CD4-positive, alpha-beta memory T cell (primary cell): ENCODE measurements at regions of chr16 and their contacts with region 1.

Region 1: GRCh38 chr16:68356249-68356918 is 45.6 kb downstream of the PRMT7 start:
- DNase-seq: peak; percentile 73 to 86 (median 80)
- H3K4me3 ChIP-seq: peak overlapping the region; percentile 23 to 29
- H3K4me3 Mint-ChIP-seq: peak overlapping the region; percentile 65 to 89 (median 80)
- H3K27ac ChIP-seq: no peak overlapping the region
- H3K27ac Mint-ChIP-seq: peak overlapping the region in 6 of 7 donors; percentile 47 to 85 (median 80)
- H3K4me1 ChIP-seq: peaks cover 40% of the 10 kb centered on the region
- H3K4me1 Mint-ChIP-seq: peaks cover 21 to 51% (median 36%) of the 10 kb centered on the region in 4 donors
- H3K27me3 ChIP-seq: no peaks in the 10 kb centered on the region
- H3K27me3 Mint-ChIP-seq: no peaks in the 10 kb centered on the region

Region 2: DNA sequence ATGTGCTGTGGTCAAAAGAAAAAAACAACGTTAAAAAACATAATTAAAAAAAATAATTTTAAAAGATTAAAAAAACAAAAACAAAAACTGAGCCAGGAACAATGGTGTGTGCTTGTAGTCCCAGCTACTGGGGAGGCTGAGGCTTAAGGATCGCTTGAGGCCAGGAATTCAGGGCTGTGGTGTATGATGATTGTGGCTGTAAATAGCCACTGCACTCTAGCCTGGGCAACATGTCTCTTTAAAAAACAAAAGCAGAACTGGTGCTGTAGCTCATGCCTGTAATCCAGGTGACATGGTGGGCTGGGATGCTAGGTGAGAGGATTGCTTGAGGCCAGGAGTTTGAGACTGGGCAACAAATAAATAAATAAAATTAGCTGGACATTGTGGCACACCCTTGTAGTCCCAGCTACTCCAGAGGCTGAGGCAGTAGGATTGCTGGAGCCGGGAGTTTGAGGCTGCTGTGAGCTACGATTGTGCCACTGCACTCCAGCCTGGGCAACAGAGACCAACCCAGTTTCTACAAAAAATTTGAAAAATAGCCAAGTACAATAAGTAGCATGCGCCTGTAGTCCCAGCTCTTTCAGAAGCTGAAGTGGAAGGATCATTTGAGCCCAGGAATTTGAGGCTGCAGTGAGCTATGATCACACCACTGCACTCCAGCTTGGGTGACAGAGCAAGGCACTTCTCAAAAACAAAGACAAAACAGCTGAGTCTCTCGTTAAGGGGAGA is 227.6 kb before region 1 on chr16:
- CTCF ChIA-PET with region 1: no interaction called
- POLR2A ChIA-PET with region 1: no interaction called
- intact Hi-C with region 1: no loop called
- DNase-seq: no peak
- H3K4me3 ChIP-seq: no peak overlapping the region
- H3K4me3 Mint-ChIP-seq: peak overlapping the region in 2 of 8 donors; percentile 3 to 39
- H3K27ac ChIP-seq: no peak overlapping the region
- H3K27ac Mint-ChIP-seq: peak overlapping the region; percentile 54 to 94 (median 85)
- H3K4me1 ChIP-seq: peaks cover 46% of the 10 kb centered on the region
- H3K4me1 Mint-ChIP-seq: peaks cover 43 to 74% (median 55%) of the 10 kb centered on the region in 4 donors
- H3K27me3 ChIP-seq: no peaks in the 10 kb centered on the region
- H3K27me3 Mint-ChIP-seq: no peaks in the 10 kb centered on the region

Region 3: DNA sequence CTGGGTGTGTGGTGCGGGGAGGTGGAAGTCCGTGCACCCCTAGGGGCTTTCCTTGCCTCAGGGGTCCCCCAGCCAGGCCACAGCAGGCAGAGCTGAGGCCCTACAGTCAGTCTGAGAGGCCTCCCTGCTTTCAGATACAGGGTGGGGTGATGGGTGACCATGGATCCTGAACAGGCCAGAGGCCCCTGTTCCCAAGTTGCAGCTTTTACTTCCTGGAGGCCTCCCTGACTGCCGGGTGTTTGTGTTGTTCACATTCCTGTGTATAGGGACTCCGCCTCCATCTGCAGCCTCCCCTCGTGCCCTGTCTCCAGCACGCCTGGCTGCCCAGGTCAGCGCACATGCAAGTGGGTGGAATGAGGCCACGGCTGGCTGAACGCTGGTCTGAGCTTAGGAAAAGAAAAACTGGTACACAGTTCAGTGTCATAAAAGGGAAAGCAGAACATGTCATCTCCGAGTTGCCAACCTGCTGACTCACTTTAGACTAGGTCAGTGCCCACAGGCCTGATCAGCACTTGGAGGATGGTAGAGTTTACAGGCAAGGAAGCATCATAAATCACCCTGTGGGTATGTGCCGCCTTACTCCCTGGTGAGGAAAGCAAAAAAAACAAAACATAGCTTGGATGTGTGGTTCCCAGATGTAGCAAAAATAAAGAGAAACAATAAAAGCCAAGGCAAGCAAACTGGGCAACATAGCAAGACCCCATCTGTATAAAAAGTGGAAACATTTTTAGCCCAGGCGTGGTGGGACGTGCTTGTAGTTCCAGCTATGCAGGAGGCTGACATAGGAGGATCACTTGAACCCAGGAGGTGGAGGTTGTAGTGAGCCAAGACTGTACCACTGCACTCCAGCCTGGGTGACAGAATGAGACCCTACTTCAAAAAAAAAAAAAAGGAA is 98.2 kb before region 1 on chr16:
- CTCF ChIA-PET with region 1: interaction called, 14 read pairs
- POLR2A ChIA-PET with region 1: no interaction called
- intact Hi-C with region 1: no loop called
- DNase-seq: no peak
- H3K4me3 ChIP-seq: no peak overlapping the region
- H3K4me3 Mint-ChIP-seq: no peak overlapping the region
- H3K27ac ChIP-seq: no peak overlapping the region
- H3K27ac Mint-ChIP-seq: peak overlapping the region in 4 of 7 donors; percentile 12 to 86 (median 49)
- H3K4me1 ChIP-seq: peaks cover 10% of the 10 kb centered on the region
- H3K4me1 Mint-ChIP-seq: peaks cover 8 to 19% (median 9%) of the 10 kb centered on the region in 4 donors
- H3K27me3 ChIP-seq: no peaks in the 10 kb centered on the region
- H3K27me3 Mint-ChIP-seq: no peaks in the 10 kb centered on the region

Region 4: GRCh38 chr16:68298907-68299561 is 57.4 kb before region 1 on chr16:
- CTCF ChIA-PET with region 1: no interaction called
- POLR2A ChIA-PET with region 1: no interaction called
- intact Hi-C with region 1: no loop called
- DNase-seq: no peak
- H3K4me3 ChIP-seq: no peak overlapping the region
- H3K4me3 Mint-ChIP-seq: no peak overlapping the region
- H3K27ac ChIP-seq: no peak overlapping the region
- H3K27ac Mint-ChIP-seq: peak overlapping the region in 5 of 7 donors; percentile 14 to 78 (median 29)
- H3K4me1 ChIP-seq: no peaks in the 10 kb centered on the region
- H3K4me1 Mint-ChIP-seq: peaks cover 12 to 28% (median 18%) of the 10 kb centered on the region in 4 donors
- H3K27me3 ChIP-seq: no peaks in the 10 kb centered on the region
- H3K27me3 Mint-ChIP-seq: no peaks in the 10 kb centered on the region